ENCODE measurements at regions of chr11 and their contacts with region 1.

Region 1: DNA sequence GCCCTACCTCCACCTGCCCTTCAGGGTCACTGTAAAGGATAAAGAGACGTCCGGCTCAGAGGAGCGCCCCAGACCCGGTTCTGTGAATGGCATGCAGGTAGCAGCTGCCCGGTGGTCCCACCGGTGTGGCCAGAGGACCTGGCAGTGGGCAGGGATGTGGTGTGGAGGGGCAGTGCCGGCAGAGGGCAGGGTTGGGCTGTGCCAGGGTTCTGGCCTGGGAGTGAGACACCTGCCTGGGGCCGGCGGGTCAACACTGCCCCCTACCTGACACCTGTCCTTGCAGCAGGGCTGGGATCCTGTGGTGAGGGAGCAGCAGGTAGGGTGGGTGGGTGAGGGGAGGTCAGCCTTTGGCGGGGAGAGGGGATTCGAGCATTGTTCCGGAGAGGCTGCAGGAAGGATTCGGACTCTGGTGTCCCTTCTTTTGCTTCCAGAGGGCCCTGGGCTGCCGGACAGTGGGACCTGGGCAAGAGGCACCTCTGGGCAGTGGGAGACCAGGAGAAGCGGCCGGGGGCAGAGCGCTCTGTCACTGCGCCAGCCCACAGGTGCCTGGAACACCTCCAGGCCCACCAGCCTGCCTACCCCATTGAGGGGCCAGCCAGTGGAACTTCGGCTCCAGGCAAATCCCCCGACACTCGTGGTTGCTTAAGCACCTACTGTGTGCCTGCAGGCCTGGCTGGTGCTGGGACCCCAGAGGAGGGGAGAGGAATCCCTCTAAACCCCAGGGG is 1.6 kb upstream of the PHLDA2 start:
- DNase-seq: peak; percentile 16
- ATAC-seq: peak; percentile 61
- H3K4me3 ChIP-seq: peak overlapping the region; percentile 62; the same call in 1 of the 2 replicates
- H3K27ac ChIP-seq: no peak overlapping the region
- H3K4me1 ChIP-seq: peaks cover 21% of the 10 kb centered on the region
- H3K27me3 ChIP-seq: peaks cover 3 to 15% of the 10 kb centered on the region in 2 experiments
- CTCF ChIP-seq: peak; percentile 48 to 89 (median 86)
- EP300 ChIP-seq: no peak
- POLR2A ChIP-seq: no peak
- RAD21 ChIP-seq: peak; percentile 62

Region 2: DNA sequence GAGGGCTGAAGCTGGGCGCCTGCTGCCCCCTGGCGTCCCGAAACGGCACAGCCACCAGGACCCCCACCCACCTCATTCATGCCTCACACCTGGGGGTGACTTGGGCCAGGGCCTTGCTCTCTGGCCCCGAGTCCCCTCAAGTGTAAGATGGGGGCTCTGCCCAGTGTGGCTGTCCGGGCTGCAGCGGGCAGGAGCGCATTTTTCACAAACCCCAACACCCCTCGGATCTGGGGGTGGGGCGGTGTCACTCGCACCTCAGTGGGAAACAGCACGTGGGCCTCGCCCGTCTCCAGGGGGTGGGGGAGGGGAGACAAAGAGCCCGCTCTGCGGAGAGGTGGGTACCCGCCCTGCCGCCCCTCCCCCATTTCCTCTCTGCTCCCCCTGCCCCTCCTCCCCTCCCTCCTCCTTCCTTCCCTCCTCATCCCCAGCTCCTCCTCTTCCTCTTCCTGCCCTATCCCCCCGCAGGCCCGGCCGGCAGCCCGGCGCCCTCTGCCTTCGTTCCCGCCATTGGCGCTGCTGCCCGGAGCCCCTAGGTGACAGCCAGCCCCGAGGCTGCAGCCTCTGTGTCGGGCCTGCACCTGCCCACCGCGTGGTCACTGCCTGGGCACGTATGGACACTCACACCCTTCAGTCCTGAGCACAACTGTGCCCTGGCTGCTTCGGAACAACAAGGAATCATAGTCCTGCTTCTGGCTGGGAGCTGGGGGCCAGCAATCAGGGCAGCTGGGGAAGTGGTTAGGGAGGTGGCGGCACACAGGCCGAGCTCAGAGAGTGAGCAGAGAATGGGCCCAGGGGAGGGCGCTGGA is 38.4 kb before region 1 on chr11:
- CTCF ChIA-PET with region 1: interaction called, 25 read pairs
- POLR2A ChIA-PET with region 1: interaction called, 4 read pairs
- RAD21 ChIA-PET with region 1: interaction called, 14 read pairs
- SMC1A ChIA-PET with region 1: interaction called, 14 read pairs
- in situ Hi-C with region 1: no loop called
- intact Hi-C with region 1: loop called (anchors 2 kb)
- DNase-seq: no peak
- ATAC-seq: peak; percentile 80
- H3K4me3 ChIP-seq: peak overlapping the region; percentile 58
- H3K27ac ChIP-seq: no peak overlapping the region
- H3K4me1 ChIP-seq: peaks cover 4% of the 10 kb centered on the region
- H3K27me3 ChIP-seq: no peaks in the 10 kb centered on the region
- CTCF ChIP-seq: peak; percentile 82 to 92 (median 83)
- EP300 ChIP-seq: no peak
- POLR2A ChIP-seq: peak; percentile 59; the same call in 1 of the 2 replicates
- RAD21 ChIP-seq: peak; percentile 67

Region 3: DNA sequence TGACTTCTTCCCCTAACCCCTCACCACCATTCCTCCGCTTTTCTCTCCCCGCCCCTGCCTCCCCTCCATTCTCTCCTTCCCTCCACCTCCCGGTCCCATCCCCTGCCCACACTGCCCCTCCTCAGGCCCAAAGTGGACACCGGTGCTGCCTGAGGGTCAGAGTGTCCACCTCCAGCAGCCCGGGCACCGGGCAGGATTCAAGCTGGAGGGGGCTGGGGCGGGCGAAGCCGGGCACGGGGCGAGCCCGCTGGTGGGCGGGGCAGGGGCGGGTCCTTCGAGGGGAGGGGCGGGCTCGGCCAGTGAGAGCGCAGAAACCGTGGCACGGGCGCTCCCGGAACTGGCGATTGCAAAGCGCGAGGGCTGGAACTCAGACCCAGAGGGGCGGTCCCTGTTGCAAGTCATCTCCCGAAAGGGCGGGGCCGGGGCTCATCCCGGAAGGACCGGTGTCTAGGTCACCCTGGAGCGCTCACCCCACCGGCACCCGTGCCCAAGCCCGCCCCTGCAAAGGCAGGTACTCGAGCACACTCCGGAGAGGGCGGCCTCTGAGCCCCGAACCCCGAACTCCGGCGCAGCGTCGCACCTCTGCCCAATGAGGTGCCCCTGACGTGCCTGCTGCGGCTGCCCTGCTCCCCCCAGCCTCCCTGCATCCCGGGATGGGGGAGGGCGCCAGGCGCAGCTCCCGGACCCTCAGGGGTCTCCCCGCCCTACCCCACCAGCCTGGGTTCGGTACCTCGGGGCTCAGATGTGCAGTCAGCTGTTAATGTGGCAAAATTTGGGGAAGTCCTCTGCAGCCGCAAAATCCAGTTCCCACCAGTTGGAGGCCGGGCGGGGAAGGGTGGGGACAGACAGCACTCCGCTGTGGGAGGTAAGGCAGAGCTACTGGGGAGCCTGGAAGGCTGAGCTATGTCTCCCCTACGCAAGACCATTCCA is 28.7 kb before region 1 on chr11:
- CTCF ChIA-PET with region 1: interaction called, 13 read pairs
- POLR2A ChIA-PET with region 1: interaction called, 8 read pairs
- RAD21 ChIA-PET with region 1: interaction called, 3 read pairs
- SMC1A ChIA-PET with region 1: no interaction called
- in situ Hi-C with region 1: no loop called
- intact Hi-C with region 1: no loop called
- DNase-seq: peak; percentile 66
- ATAC-seq: peak; percentile 99
- H3K4me3 ChIP-seq: peak overlapping the region; percentile 97
- H3K27ac ChIP-seq: peak overlapping the region; percentile 63
- H3K4me1 ChIP-seq: peaks cover 18% of the 10 kb centered on the region
- H3K27me3 ChIP-seq: no peaks in the 10 kb centered on the region
- CTCF ChIP-seq: no peak
- EP300 ChIP-seq: no peak
- POLR2A ChIP-seq: peak; percentile 88
- RAD21 ChIP-seq: no peak

Region 4: DNA sequence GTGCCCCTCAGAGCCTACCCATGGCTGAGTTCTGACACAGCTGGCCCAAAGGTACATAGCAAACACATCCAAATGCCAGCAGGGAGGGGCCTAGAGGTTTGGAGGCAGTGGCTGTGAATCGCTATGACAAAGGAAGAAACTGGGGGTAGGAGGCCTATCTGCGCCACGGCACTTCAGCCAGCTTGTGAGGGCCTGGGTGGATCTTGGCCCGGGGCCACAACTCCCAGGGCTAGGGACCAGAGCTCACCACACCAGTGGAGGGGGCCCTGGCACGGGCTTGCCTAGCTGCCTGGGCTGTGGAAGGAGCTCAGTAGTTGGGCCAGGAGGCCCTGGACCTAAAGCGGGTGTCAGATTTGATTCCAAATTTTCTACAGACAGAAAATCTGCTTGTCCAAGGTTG is 70.6 kb after region 1 on chr11:
- CTCF ChIA-PET with region 1: no interaction called
- POLR2A ChIA-PET with region 1: no interaction called
- RAD21 ChIA-PET with region 1: no interaction called
- SMC1A ChIA-PET with region 1: no interaction called
- in situ Hi-C with region 1: no loop called
- intact Hi-C with region 1: no loop called
- DNase-seq: no peak
- ATAC-seq: no peak
- H3K4me3 ChIP-seq: no peak overlapping the region
- H3K27ac ChIP-seq: no peak overlapping the region
- H3K4me1 ChIP-seq: no peaks in the 10 kb centered on the region
- H3K27me3 ChIP-seq: no peaks in the 10 kb centered on the region
- CTCF ChIP-seq: no peak
- EP300 ChIP-seq: no peak
- POLR2A ChIP-seq: no peak
- RAD21 ChIP-seq: no peak

Region 5: GRCh38 chr11:3021125-3021524 is 90.3 kb after region 1 on chr11:
- CTCF ChIA-PET with region 1: interaction called, 10 read pairs
- POLR2A ChIA-PET with region 1: no interaction called
- RAD21 ChIA-PET with region 1: interaction called, 3 read pairs
- SMC1A ChIA-PET with region 1: no interaction called
- in situ Hi-C with region 1: no loop called
- intact Hi-C with region 1: no loop called
- DNase-seq: no peak
- ATAC-seq: peak; percentile 83
- H3K4me3 ChIP-seq: no peak overlapping the region
- H3K27ac ChIP-seq: no peak overlapping the region
- H3K4me1 ChIP-seq: peaks cover 17% of the 10 kb centered on the region
- H3K27me3 ChIP-seq: no peaks in the 10 kb centered on the region
- CTCF ChIP-seq: peak; percentile 50 to 56 (median 55)
- EP300 ChIP-seq: no peak
- POLR2A ChIP-seq: no peak
- RAD21 ChIP-seq: peak; percentile 74